ENCODE measurements at regions of chr11 and their contacts with region 1.

Region 1: GRCh38 chr11:133927690-133928627 is 28.8 kb downstream of the IGSF9B start:
- DNase-seq: peak; percentile 76
- ATAC-seq: peak; percentile 71
- H3K4me3 Mint-ChIP-seq: peak overlapping the region; percentile 74
- H3K27ac Mint-ChIP-seq: peak overlapping the region; percentile 83
- H3K4me1 Mint-ChIP-seq: peaks cover 28% of the 10 kb centered on the region
- H3K27me3 Mint-ChIP-seq: no peaks in the 10 kb centered on the region

Region 2: GRCh38 chr11:133887692-133888332 is 40.1 kb before region 1 on chr11:
- POLR2A ChIA-PET with region 1: no interaction called
- DNase-seq: no peak
- ATAC-seq: no peak
- H3K4me3 Mint-ChIP-seq: no peak overlapping the region
- H3K27ac Mint-ChIP-seq: no peak overlapping the region
- H3K4me1 Mint-ChIP-seq: no peaks in the 10 kb centered on the region
- H3K27me3 Mint-ChIP-seq: peaks cover 43% of the 10 kb centered on the region

Region 3: GRCh38 chr11:133898031-133898769 is 29.8 kb before region 1 on chr11:
- POLR2A ChIA-PET with region 1: no interaction called
- DNase-seq: peak; percentile 4
- ATAC-seq: no peak
- H3K4me3 Mint-ChIP-seq: no peak overlapping the region
- H3K27ac Mint-ChIP-seq: no peak overlapping the region
- H3K4me1 Mint-ChIP-seq: peaks cover 4% of the 10 kb centered on the region
- H3K27me3 Mint-ChIP-seq: no peaks in the 10 kb centered on the region

Region 4: GRCh38 chr11:133947321-133947756 is 19.4 kb after region 1 on chr11:
- POLR2A ChIA-PET with region 1: interaction called, 18 read pairs
- DNase-seq: peak; percentile 82
- ATAC-seq: peak; percentile 41
- H3K4me3 Mint-ChIP-seq: peak overlapping the region; percentile 92
- H3K27ac Mint-ChIP-seq: peak overlapping the region; percentile 93
- H3K4me1 Mint-ChIP-seq: peaks cover 69% of the 10 kb centered on the region
- H3K27me3 Mint-ChIP-seq: no peaks in the 10 kb centered on the region

Region 5: GRCh38 chr11:133961890-133962289 is 33.9 kb after region 1 on chr11:
- POLR2A ChIA-PET with region 1: no interaction called
- DNase-seq: no peak
- ATAC-seq: no peak
- H3K4me3 Mint-ChIP-seq: no peak overlapping the region
- H3K27ac Mint-ChIP-seq: no peak overlapping the region
- H3K4me1 Mint-ChIP-seq: peaks cover 16% of the 10 kb centered on the region
- H3K27me3 Mint-ChIP-seq: peaks cover 20% of the 10 kb centered on the region

Region 6: GRCh38 chr11:134008634-134009071 is 80.7 kb after region 1 on chr11:
- POLR2A ChIA-PET with region 1: no interaction called
- DNase-seq: no peak
- ATAC-seq: no peak
- H3K4me3 Mint-ChIP-seq: no peak overlapping the region
- H3K27ac Mint-ChIP-seq: no peak overlapping the region
- H3K4me1 Mint-ChIP-seq: peaks cover 2% of the 10 kb centered on the region
- H3K27me3 Mint-ChIP-seq: peaks cover 32% of the 10 kb centered on the region

Measured in activated naive CD8-positive, alpha-beta T cell treated with anti-CD3 and anti-CD28 coated beads, Interleukin-2, amount 10 ng/mL, durations not matched to agents 7 days and 5 days (primary cell).